ENCODE measurements at regions of chr16 and their contacts with region 1.

Region 1: GRCh38 chr16:31428638-31429247 is 583 bp upstream of the COX6A2 start:
- DNase-seq: no peak
- H3K4me3 ChIP-seq: no peak overlapping the region
- H3K27ac ChIP-seq: no peak overlapping the region
- H3K4me1 ChIP-seq: no peaks in the 10 kb centered on the region
- H3K27me3 ChIP-seq: peaks cover 13% of the 10 kb centered on the region
- CTCF ChIP-seq: no peak

Region 2: GRCh38 chr16:31157136-31157535 is 271.6 kb before region 1 on chr16:
- CTCF ChIA-PET with region 1: no interaction called
- POLR2A ChIA-PET with region 1: interaction called, 10 read pairs
- intact Hi-C with region 1: no loop called
- DNase-seq: no peak
- H3K4me3 ChIP-seq: no peak overlapping the region
- H3K27ac ChIP-seq: no peak overlapping the region
- H3K4me1 ChIP-seq: no peaks in the 10 kb centered on the region
- H3K27me3 ChIP-seq: no peaks in the 10 kb centered on the region
- CTCF ChIP-seq: no peak

Measured in A673 (cell line).